Left ventricle myocardium superior (tissue), 1 donor: ENCODE measurements at regions of chr19 and their contacts with region 1.

Region 1: DNA sequence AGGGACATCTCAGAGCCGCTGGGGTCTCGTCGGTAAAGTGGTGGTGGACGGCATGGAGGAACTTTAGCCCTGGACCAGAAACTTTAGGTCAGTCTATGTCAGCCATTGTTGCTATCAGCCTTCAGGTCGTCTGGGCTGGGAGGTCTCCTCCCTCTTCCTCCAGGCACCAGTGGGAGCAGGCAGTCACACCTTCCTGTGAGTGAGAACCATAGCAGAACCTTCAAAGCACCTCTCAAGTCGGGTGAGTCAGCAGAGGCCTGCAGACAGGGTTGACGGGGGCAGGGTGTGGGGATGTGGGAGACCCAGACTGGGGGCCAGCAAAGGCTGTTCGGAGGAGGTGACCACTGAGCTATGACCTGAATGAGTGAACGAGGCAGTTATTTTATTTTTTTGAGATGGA is 15.4 kb upstream of the SBNO2 start:
- DNase-seq: no peak
- ATAC-seq: no peak

Region 2: GRCh38 chr19:1087813-1088415 is 101.5 kb before region 1 on chr19:
- intact Hi-C with region 1: no loop called
- DNase-seq: peak; percentile 42
- ATAC-seq: peak; percentile 58

Region 3: DNA sequence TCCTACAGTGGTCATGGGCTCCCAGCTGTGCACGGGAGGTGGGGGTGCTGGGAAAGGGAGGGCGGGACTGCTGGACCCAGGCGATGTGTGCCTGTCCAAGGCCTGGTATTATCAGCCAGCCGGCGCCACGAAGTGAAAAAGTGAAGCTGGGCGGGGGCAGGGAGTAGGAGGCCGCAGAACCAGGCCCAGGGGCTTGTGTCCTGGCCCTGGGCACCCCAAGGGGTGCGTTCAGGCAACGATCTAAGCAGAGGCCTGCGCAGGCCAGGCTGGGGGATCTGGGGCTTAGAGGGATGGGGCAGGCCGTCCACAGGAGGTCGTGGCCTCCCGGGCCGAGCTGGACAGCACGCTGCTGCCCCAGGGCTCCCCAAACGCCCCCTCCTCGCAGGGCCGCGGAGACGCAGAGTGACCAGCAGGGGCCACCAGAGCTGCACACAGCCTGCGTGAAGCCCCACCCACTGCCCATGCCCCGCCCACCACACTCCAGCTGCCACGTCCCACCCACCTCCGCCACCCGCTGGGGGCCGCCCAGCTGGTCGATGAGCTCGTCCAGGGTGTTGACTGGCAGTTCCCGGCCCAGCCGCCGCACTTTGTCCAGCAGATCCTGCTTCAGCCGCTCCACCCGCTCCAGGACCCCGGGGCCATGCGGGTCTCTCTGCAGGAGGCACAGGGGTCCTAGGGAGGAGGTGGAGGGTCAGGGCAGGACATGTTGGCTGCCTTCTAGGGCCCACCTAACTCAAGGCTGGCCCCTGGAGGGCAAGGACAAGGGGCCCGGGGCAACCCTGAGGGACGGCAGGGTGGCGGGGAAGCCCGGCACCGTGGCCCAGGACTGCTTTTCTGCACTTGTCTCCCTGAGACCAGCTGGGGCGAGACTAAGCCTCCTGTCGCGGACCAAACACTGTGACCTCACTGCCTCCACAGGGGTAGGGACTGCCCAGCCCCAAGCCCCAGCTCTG is 76.1 kb before region 1 on chr19:
- intact Hi-C with region 1: loop called (anchors 10 kb)
- DNase-seq: peak; percentile 98
- ATAC-seq: peak; percentile 91

Region 4: DNA sequence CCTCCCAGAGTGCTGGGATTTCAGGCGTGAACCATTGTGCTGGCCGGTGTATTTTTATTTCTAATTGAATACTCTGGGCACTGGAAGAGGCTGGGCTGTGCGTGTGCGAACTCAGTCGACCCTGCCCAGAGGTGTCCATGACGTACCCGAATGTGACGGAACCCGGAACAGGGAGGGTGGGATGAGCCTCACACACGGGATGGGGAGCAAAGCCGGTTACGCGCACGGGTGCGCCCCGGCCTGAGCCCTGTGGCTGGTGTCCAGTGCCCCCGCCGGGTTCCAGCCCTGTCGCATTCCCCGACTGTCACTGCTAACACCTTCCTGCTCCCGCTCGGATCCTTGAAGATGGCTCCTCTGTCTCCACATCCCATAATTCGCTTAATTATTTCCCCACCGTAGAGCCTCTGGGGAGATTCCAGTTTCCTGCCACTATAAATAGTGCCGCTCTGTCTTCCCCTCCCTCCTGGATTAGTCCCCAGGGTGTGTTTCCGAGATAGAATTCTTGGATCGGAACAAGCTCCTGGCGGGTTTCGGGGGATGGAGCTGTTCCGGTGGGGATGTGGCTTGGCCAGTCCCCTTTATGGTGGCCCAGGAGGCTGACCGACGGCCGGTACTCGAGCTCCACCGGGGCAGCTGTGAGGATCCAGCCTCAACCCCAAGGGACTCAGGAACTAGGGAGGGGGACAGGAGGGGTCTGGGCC is 37.4 kb before region 1 on chr19:
- intact Hi-C with region 1: no loop called
- DNase-seq: peak; percentile 66
- ATAC-seq: peak; percentile 51

Region 5: GRCh38 chr19:1241417-1242095 is 52.1 kb after region 1 on chr19 and contains the start of gene ATP5F1D:
- intact Hi-C with region 1: no loop called
- DNase-seq: peak; percentile 98
- ATAC-seq: peak; percentile 52
- total RNA-seq, gene ATP5F1D: 686 TPM

Region 6: GRCh38 chr19:1336079-1336684 is 146.8 kb after region 1 on chr19:
- intact Hi-C with region 1: no loop called
- DNase-seq: no peak
- ATAC-seq: no peak